ENCODE measurements at regions of chr3 and their contacts with region 1.

Region 1: DNA sequence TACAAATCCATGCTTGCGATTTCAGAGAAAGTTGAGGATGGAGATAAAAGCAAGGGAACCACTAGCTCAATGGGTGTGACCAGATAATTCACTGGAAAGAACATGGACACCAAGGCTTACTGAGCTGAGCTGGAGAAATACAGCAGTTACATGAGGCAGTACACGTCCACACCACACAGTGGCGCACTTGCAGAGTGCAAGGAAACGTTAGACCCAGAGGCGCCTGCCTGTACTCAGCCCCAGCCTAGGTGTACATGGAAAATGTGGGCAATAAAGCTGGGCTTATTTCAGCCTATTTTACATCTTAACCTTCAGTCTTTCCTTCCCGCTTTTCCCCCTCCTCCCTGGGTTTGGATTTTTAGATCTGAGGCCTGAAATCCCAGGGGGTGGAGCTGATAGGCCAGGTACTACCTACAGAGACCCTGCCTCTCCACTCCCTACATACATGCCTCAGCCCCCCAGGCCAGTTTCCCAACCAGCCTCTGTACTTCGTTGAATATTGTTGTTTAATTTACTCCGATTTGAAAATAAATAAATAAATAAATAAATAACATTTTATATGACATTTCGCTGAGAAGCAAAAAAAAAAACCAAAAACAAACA is 60.1 kb downstream of the PCOLCE2 start:
- DNase-seq: peak; percentile 57 to 90 (median 80)
- ATAC-seq: peak; percentile 96 to 100 (median 100)
- H3K4me3 ChIP-seq: no peak overlapping the region
- H3K27ac ChIP-seq: no peak overlapping the region
- H3K4me1 ChIP-seq: no peaks in the 10 kb centered on the region
- H3K27me3 ChIP-seq: no peaks in the 10 kb centered on the region
- CTCF ChIP-seq: peak; percentile 49 to 85 (median 70)

Region 2: GRCh38 chr3:141426404-141427034 is 1402.3 kb before region 1 on chr3:
- intact Hi-C with region 1: no loop called
- DNase-seq: peak; percentile 74 to 89 (median 86)
- ATAC-seq: peak; percentile 85 to 95 (median 90)
- H3K4me3 ChIP-seq: no peak overlapping the region
- H3K27ac ChIP-seq: peak overlapping the region; percentile 44 to 93 (median 71)
- H3K4me1 ChIP-seq: peaks cover 24 to 36% (median 34%) of the 10 kb centered on the region in 3 donors
- H3K27me3 ChIP-seq: no peaks in the 10 kb centered on the region
- CTCF ChIP-seq: no peak

Region 3: DNA sequence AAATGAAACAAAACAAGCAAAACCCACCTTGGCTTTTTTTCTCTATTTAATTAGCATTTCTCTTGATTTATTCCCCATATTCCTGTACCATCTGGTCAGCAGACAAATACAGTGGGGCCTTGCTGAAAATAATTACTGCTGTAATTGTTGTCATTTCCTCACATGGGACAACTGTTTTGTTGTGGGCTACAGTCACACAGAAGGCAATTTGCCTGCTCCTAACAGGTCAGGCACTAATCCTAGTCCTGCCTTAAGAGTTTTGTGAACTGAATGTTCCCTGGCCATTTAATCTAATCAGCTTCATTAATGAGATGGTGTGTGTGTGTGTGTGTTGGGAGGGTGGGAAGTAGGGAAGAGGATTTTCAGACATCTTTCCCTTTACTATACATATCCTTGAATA is 93.3 kb before region 1 on chr3:
- intact Hi-C with region 1: no loop called
- DNase-seq: no peak
- ATAC-seq: no peak
- H3K4me3 ChIP-seq: no peak overlapping the region
- H3K27ac ChIP-seq: no peak overlapping the region
- H3K4me1 ChIP-seq: no peaks in the 10 kb centered on the region
- H3K27me3 ChIP-seq: no peaks in the 10 kb centered on the region
- CTCF ChIP-seq: no peak

Region 4: DNA sequence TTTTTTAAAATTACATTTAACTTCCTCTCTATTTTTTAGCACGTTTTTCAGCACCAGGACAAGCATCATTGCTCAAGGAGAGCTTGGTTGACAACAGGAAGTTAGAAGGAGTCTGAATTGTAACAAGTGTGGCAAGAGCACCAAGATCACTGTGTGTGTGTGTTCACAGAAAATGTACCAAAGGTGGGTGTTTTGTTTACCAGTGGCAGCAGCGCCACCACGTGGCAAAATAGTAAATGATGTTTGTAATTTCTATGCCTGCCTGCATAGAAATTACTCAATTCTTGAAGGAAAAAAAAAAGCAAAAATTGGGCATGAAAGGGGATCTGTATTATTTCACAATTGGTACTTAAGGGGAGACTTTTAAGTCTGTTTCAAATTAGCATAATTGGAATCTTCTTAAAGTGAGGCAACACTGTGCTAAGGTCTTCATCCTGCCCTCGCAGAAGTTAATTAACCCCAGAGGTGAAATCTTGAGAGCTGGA is 165.2 kb after region 1 on chr3:
- intact Hi-C with region 1: loop called in 2 of 3 experiments (anchors 2 to 10 kb)
- DNase-seq: peak in 2 of 6 donors; percentile 14 to 46
- ATAC-seq: peak in 3 of 4 donors; percentile 62 to 75 (median 73)
- H3K4me3 ChIP-seq: no peak overlapping the region
- H3K27ac ChIP-seq: no peak overlapping the region
- H3K4me1 ChIP-seq: no peaks in the 10 kb centered on the region
- H3K27me3 ChIP-seq: peaks cover 0 to 5% (median 0%) of the 10 kb centered on the region in 4 donors
- CTCF ChIP-seq: peak in 3 of 4 donors; percentile 40 to 56 (median 41)

Measured in pancreas (tissue), 10 donors.